ENCODE measurements at regions of chr1 and their contacts with region 1.

Region 1: DNA sequence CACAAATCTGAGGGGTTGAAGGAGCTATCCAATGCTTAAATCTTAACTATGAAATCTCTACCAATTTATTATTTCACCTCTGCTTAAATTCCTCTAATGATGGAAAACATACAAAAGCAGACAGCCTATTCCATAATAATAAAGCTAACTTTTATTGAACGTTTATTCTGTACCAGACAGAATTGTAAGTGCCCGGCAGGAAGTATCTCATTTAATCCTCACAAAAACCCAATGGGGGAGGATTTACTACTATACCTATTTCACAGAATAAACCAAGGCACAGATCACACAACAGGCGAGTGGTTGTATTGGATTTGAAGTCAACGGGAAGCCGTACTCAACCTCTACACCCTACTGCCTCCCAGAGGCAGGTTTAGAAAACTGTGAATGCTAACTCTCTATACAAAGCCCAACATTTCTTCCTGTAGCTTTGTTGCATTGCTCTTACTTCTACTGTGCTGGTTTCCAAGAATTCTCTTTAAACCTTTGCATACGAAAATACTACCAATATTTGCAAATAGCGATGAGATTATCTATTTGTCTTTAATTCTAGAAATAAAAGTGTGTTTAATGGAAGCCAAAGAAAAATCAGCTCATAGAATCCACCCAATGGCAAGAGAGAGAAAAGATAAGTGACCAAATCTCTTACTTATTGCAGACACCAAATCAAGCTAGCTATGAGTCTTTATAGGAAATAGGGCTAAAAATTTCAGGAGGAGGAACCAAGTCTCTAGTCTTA is 33.5 kb upstream of the C1orf53 start:
- DNase-seq: peak; percentile 74
- H3K4me3 ChIP-seq: no peak overlapping the region
- H3K27ac ChIP-seq: no peak overlapping the region
- H3K4me1 ChIP-seq: no peaks in the 10 kb centered on the region
- CTCF ChIP-seq: peak; percentile 95

Region 2: DNA sequence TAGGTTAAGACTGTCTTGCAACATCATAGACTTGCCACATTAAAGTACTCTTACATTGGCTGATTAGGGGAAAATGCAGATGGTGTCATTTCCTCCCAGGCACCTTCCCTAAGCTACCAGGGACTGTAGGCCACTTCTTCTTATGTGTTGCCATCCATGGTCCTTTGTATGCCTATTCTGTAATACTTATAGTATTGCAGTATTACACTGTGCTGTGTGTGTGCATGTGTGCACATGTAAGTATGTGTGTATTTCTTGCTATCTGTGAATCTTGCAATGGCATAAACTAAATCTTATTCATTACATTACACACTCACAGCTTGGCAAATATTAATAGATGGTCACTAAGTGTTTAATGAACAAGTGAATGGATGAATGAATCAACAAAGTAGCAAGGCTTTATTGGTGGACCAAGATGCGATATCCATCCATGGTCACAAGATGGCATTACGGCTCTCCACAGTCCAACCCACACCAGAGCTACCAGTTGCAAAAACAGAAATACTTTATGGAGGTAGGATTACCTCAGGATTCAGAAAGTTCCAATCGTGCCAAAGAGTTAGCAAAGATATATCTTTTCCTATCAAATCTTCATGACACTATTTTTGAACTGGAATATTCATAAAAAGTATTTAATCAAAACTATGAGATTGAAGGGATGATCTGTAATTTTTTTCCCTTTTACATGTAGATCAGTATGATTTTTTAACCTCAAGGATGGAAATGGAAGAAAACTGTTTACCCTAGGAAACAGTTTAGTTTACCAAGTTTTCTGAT is 253.8 kb before region 1 on chr1:
- CTCF ChIA-PET with region 1: interaction called, 6 read pairs
- POLR2A ChIA-PET with region 1: interaction called, 3 read pairs
- intact Hi-C with region 1: loop called (anchors 1 kb)
- DNase-seq: peak; percentile 53
- H3K4me3 ChIP-seq: no peak overlapping the region
- H3K27ac ChIP-seq: no peak overlapping the region
- H3K4me1 ChIP-seq: peaks cover 10% of the 10 kb centered on the region
- CTCF ChIP-seq: peak; percentile 92

Region 3: DNA sequence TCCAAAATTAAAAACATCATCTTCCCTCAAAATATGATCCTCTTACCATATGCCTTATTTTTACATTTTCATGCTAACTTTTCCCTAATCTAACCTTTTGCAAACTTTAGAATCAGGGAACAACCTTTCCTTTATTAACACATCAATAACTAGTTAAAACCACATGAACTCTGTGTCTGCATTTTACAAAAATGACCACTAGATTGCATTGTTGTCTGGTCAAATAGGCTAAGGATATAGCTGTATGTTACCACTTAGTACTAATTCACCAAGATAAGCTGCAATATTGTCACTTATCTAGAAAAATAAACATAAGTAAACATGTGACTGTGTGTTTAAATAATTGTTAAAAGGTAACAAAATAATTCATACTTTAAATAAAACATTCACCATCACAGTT is 176.0 kb before region 1 on chr1:
- CTCF ChIA-PET with region 1: no interaction called
- POLR2A ChIA-PET with region 1: no interaction called
- intact Hi-C with region 1: loop called (anchors 5 kb)
- DNase-seq: peak; percentile 19
- H3K4me3 ChIP-seq: no peak overlapping the region
- H3K27ac ChIP-seq: no peak overlapping the region
- H3K4me1 ChIP-seq: peaks cover 8% of the 10 kb centered on the region
- CTCF ChIP-seq: peak; percentile 73